RWPE1 (cell line): ENCODE measurements at regions of chr12 and their contacts with region 1.

Region 1: GRCh38 chr12:49088190-49088931 is 6.2 kb downstream of the DHH start:
- DNase-seq: peak; percentile 92
- H3K27ac ChIP-seq: no peak overlapping the region
- CTCF ChIP-seq: peak; percentile 90

Region 2: DNA sequence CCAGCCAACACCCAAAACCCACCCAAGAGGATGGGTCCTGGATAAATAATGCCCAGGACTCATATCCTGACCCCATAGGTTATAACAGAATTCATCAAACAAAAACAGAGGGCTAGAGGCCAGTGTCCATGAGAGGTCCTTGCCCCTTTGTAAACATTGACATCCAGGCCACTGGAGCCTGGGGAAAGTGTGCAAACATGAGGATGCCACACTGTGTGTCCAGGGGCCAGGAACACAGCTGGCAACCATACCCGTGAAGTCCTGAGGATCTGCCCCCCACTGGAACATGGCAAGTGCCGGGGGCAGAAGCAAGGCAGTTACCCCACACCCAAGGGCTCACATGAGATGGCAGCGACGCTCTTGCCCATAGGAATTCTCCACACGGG is 23.6 kb before region 1 on chr12:
- CTCF ChIA-PET with region 1: interaction called, 18 read pairs
- POLR2A ChIA-PET with region 1: no interaction called
- DNase-seq: no peak
- H3K27ac ChIP-seq: no peak overlapping the region
- CTCF ChIP-seq: no peak

Region 3: GRCh38 chr12:49105608-49106007 is 17.2 kb after region 1 on chr12:
- CTCF ChIA-PET with region 1: interaction called, 65 read pairs
- POLR2A ChIA-PET with region 1: no interaction called
- DNase-seq: peak; percentile 41
- H3K27ac ChIP-seq: peak overlapping the region; percentile 38; the same call in 1 of the 2 replicates
- CTCF ChIP-seq: no peak

Region 4: GRCh38 chr12:49110464-49111155 is 22.2 kb after region 1 on chr12 and contains the start of gene LMBR1L:
- CTCF ChIA-PET with region 1: interaction called, 26 read pairs
- POLR2A ChIA-PET with region 1: no interaction called
- DNase-seq: peak; percentile 100
- H3K27ac ChIP-seq: peak within 1 kb of the TSS; percentile 87
- CTCF ChIP-seq: peak; percentile 47; the same call in 1 of the 2 replicates

Region 5: GRCh38 chr12:49121047-49121696 is 32.8 kb after region 1 on chr12:
- CTCF ChIA-PET with region 1: interaction called, 19 read pairs
- POLR2A ChIA-PET with region 1: no interaction called
- DNase-seq: peak; percentile 62
- H3K27ac ChIP-seq: no peak overlapping the region
- CTCF ChIP-seq: peak; percentile 66

Region 6: GRCh38 chr12:49130151-49131050 is 42.0 kb after region 1 on chr12:
- CTCF ChIA-PET with region 1: interaction called, 12 read pairs
- POLR2A ChIA-PET with region 1: interaction called, 3 read pairs
- DNase-seq: peak; percentile 90
- H3K27ac ChIP-seq: peak overlapping the region; percentile 99
- CTCF ChIP-seq: peak; percentile 94